ENCODE measurements at regions of chr12 and their contacts with region 1.

Region 1: DNA sequence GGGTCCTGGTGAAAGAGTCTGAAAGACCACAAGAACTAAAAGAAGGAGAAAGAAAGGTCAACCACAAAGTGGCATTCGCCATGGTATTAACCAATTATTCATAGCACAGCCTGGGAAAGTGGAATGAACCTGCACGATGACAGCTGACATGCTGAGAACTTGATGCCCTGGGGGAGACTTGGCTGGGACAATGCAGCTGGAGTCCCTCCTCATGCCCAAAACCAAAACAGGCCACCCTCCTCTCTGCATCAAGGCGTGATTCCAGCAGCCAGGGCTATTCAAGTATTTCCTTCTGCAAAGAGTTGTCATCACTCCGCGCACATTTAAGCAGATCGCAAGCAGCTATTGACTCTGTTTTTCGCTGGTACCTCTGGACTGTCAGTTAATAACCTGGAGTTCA is 167.1 kb upstream of the NOS1 start:
- DNase-seq: no peak
- H3K4me3 ChIP-seq: no peak overlapping the region
- H3K27ac ChIP-seq: no peak overlapping the region
- H3K4me1 ChIP-seq: no peaks in the 10 kb centered on the region
- H3K27me3 ChIP-seq: no peaks in the 10 kb centered on the region
- CTCF ChIP-seq: no peak
- POLR2A ChIP-seq: no peak

Region 2: DNA sequence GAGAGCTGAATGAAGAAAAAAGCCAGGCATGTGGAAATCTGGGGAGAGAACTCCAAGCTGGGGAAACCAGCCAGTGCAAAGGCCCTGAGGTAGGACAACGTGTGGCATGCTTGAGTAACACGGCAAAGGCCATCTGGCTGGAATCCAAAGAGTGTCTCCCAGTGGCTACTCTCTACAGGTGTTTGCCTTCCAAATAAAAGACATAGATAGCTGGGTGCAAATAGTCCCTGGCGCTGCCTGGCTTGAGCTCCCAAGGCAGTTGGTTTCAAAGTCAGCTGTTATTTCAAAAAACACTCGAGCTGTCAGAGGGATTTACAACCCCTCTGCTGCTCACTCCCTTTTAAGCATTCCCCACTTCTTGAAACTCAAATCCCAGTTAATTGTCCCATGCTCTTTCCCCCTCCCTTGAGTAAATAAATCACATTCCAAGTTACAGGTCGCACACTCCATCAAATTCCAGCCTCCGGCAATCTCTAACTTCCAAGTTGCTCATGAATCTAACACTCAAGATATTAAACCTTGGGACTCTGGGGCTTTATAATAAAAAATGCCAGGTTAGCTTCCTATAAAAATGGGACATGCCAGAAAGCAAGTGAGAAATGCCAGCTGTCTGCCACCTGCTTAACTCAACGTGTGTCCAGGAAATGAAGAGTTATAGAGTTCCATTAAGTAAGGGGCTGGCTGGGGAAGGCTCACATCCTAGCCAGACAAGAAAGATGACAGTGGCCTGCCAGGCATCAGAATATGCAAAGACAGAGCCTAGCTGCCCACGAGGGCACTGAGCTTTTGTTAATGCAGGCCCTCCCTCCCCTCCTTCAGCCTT is 33.5 kb before region 1 on chr12:
- intact Hi-C with region 1: loop called (anchors 1 kb)
- DNase-seq: no peak
- H3K4me3 ChIP-seq: no peak overlapping the region
- H3K27ac ChIP-seq: no peak overlapping the region
- H3K4me1 ChIP-seq: no peaks in the 10 kb centered on the region
- H3K27me3 ChIP-seq: no peaks in the 10 kb centered on the region
- CTCF ChIP-seq: no peak
- POLR2A ChIP-seq: no peak

Region 3: GRCh38 chr12:117564881-117565280 is 36.3 kb after region 1 on chr12:
- intact Hi-C with region 1: no loop called
- DNase-seq: no peak
- H3K4me3 ChIP-seq: no peak overlapping the region
- H3K27ac ChIP-seq: no peak overlapping the region
- H3K4me1 ChIP-seq: no peaks in the 10 kb centered on the region
- H3K27me3 ChIP-seq: no peaks in the 10 kb centered on the region
- CTCF ChIP-seq: no peak
- POLR2A ChIP-seq: no peak

Measured in breast epithelium (tissue), 4 donors.